Posterior cingulate gyrus (tissue), 11 donors: ENCODE measurements at regions of chr2 and their contacts with region 1.

Region 1: GRCh38 chr2:70029814-70030409 is 57.4 kb upstream of the PCBP1 start:
- DNase-seq: peak in 8 of 10 donors; percentile 25 to 91 (median 39)

Region 2: DNA sequence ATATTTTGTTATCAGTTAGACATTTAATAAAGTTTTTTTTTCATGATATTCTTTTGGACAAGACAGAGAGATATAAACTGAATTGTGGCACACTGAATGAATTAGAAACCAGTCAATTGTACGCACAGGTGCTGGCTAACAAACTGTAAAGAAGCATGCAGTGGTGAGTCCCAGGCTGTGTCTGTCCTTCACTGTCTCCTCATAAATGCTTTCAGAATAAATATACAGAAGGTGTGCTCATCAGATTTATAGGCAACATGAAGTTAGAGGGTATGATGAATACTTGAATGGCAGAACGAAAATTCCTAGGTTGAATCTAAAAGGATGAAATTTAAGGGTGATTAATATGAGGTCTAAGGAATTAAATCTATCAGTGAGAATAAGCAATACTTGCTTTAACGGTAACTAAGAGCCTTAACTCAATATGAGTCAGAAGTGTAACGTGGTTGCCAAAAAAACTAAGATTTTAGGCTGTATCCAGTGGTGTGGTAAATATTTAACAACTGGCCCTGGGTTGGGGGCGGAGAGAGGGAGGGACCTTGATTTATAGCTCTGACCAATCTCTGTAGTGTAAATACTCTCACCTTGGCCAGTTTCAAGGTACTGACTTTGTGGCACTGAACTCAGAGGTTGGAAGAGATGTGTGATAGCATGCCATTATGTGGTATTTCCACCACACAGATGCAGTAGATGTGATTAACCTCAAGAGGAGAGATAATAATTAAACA is 344.4 kb before region 1 on chr2:
- intact Hi-C with region 1: no loop called
- DNase-seq: no peak

Region 3: DNA sequence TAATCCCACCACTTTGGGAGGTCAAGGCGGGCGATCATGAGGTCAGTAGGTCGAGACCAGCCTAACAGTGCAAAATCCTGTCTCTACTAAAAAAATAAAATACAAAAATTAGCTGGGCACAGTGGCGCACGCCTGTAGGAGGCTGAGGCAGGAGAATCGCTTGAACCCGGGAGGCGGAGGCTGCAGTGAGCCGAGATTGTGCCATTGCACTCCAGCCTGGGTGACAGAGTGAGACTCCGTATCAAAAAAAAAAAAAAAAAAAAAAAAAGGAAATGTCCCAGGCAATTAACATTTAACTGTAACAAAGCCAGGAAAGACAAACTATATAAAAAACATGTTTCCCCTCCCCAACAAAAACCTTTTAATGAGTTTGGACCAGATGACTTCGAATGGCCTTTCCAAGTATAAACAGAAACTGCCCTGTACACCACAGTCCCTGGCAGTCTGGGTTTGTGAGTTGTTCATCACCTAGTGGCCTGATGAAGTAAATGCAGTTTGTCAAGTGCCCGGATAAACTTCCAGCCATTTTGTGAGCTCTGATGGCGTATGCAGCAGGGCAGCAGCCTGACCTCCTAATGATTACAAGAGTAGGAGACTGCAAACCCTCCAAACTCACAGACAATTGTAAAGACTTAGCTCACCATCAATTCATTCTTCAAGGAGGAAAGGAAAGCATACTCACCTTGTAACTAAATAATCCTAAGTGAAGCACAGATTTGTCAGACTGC is 40.8 kb after region 1 on chr2:
- intact Hi-C with region 1: loop called (anchors 5 kb)
- DNase-seq: peak in 8 of 10 donors; percentile 33 to 92 (median 66)